ENCODE measurements at regions of chr11 and their contacts with region 1.

Region 1: GRCh38 chr11:3037040-3037944 is 19.9 kb downstream of the CARS1 start:
- DNase-seq: peak; percentile 89
- ATAC-seq: peak; percentile 96
- H3K4me3 Mint-ChIP-seq: no peak overlapping the region
- H3K27ac Mint-ChIP-seq: peak overlapping the region; percentile 8; the same call in 1 of the 2 replicates
- H3K4me1 Mint-ChIP-seq: no peaks in the 10 kb centered on the region
- H3K27me3 Mint-ChIP-seq: no peaks in the 10 kb centered on the region
- CTCF ChIP-seq: peak; percentile 68

Region 2: DNA sequence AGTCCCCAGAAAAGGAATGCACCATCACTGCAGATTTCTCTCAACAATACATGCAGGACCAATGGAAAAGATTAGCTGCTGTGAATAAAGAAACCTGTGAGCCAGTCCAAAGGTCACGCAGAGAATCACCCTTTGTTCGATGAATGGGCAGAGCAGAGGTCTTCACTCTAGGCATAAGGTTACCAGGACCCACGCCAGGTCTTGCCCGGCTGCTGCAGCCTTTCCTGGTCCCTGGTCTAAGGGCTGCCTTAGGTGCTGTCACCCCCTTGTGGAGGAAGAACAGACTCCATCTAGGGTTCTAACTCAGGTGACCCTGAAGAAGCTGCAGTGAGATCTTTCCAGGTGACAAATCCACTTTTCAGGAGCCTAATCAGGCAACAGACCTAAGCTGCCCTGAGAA is 16.2 kb before region 1 on chr11:
- CTCF ChIA-PET with region 1: interaction called, 15 read pairs
- POLR2A ChIA-PET with region 1: no interaction called
- DNase-seq: peak; percentile 48
- ATAC-seq: peak; percentile 93
- H3K4me3 Mint-ChIP-seq: no peak overlapping the region
- H3K27ac Mint-ChIP-seq: no peak overlapping the region
- H3K4me1 Mint-ChIP-seq: peaks cover 6% of the 10 kb centered on the region; the same call in 1 of the 2 replicates
- H3K27me3 Mint-ChIP-seq: no peaks in the 10 kb centered on the region
- CTCF ChIP-seq: no peak

Region 3: DNA sequence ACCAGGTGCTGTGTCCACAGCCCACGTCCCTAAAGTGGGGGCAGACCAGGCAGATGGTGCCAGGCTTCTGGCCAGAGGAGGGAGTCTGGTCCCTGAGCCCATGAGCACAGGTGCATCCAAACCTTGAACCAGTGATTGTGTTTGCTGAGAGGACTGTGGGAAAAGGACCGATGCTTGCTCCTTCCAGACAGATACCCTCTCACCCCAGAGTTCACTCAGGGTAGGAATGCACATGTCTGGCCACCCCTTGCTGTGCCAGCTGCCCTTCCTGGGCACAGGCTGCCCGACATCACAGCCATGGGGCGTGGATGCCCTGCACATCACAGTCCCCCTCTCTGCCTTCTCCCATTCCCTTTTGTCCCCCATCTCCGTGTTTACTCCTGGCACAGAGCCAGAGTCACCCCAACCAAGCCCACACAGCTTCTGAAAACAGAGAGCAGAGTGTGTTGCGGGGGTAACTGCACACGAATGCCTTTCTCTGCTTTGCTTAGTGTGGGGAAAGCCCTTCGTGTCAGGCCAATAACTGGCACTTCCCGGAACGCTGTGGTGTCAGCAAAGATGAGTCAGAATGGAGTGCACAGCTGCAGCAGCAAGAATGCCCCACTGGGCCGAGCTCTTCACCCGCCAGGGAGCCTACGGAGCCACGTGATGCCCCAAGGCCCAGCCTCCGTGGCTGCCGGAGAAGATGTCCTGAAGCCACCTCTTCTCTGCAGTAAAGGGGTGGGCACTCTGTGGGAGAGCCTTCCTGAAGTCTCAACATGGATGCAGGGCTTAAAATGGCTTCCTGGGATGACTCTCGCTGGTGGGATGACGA is 12.3 kb after region 1 on chr11:
- CTCF ChIA-PET with region 1: interaction called, 19 read pairs
- POLR2A ChIA-PET with region 1: interaction called, 3 read pairs
- DNase-seq: no peak
- ATAC-seq: no peak
- H3K4me3 Mint-ChIP-seq: no peak overlapping the region
- H3K27ac Mint-ChIP-seq: peak overlapping the region; percentile 78
- H3K4me1 Mint-ChIP-seq: peaks cover 26% of the 10 kb centered on the region
- H3K27me3 Mint-ChIP-seq: no peaks in the 10 kb centered on the region; the same call in 1 of the 2 replicates
- CTCF ChIP-seq: no peak

Measured in WTC11 (cell line).